Lower leg skin (tissue), 4 donors: ENCODE measurements at regions of chr10 and their contacts with region 1.

Region 1: GRCh38 chr10:125982260-125982948 is 86.0 kb downstream of the FANK1 start:
- DNase-seq: peak in 1 of 2 donors; percentile 44
- H3K4me3 ChIP-seq: no peak overlapping the region
- CTCF ChIP-seq: no peak
- POLR2A ChIP-seq: no peak

Region 2: GRCh38 chr10:126504063-126504739 is 521.8 kb after region 1 on chr10:
- intact Hi-C with region 1: loop called (anchors 10 kb)
- DNase-seq: no peak
- H3K4me3 ChIP-seq: no peak overlapping the region
- CTCF ChIP-seq: no peak
- POLR2A ChIP-seq: no peak

Region 3: DNA sequence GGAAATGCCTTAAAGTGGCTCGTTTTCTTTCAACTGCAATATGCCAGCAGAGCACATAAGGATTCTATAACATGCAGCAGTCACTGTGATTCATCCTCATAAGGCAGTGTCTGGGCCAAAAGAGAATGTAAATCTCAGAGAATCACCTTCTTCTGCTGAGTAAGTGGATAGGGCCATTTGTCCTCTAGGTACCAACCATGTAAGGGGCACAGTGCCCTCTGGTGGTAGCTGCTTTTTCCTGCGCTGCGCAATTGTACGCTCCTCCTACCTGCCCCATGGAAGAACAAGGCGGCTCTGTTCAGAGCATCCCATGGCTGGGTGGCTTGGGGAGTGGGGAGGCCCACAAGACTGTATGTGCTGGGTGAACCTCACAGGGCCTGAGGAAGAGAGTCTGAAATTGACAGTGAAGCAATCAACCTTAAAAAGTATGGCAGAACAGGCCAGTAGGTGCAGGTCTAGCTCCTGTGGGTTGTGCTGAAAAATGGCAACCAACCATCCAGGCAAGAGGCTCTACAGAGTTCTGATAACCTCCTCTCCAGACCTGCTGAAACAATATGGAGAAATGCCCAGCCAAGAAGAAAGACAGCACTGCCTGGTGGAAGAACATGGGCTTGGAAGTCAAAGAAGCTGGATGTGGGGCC is 766.7 kb after region 1 on chr10:
- intact Hi-C with region 1: loop called (anchors 5 kb)
- DNase-seq: peak; percentile 67 to 89
- H3K4me3 ChIP-seq: no peak overlapping the region
- CTCF ChIP-seq: no peak
- POLR2A ChIP-seq: no peak